Activated T-helper 2 cell treated with anti-CD3 and anti-CD28 coated beads, Interferon-gamma antibody, Interleukin-2, Interleukin-4, amounts not matched to agents 10 μg/mL and 5 μg/mL and 100 μg/mL, durations not matched to agents 14 hours and 24 hours and 36 hours (primary cell): ENCODE measurements at regions of chrX and their contacts with region 1.

Region 1: DNA sequence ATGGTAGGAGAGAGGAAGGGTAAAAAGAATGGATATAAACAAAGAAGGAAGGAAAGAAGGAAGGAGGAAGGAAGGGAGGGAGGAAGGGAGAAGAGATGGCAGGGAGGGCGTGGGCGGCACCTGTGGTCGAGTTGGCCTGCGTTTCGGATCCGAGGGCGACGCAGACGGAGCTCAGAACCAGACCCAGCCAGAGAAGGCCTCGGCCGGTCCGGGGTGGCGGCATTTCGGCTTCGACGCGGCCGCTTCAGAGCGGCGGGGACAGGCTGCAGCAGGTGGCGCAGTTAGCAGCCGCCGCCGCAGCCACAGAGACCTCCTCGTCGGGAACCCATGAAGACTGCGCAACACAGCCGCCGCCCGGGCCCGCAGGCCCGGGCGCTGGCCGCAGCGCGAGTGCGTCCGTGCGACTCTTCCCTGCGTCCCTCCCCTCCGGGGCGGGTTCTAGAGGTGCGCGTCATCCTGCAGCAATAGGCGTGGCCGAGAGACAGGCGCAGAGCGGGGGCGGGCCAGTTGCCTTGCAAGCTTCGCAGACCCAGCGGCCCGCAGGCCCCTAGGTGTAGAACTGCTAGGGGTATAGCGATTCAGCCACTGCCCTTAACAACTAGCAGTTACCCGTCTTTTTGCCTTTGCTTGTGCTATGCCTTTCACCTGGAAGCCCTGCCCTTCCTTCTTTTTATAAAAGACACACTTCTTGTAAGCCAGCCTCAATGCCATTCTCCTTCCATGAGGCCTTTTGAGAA is at the start of gene IDS:
- DNase-seq: peak; percentile 85
- H3K4me3 Mint-ChIP-seq: peak within 1 kb of the TSS; percentile 94
- H3K27ac Mint-ChIP-seq: peak within 1 kb of the TSS; percentile 95
- H3K4me1 Mint-ChIP-seq: peaks cover 31% of the 10 kb centered on the region
- H3K27me3 Mint-ChIP-seq: no peaks in the 10 kb centered on the region
- total RNA-seq, gene IDS: 40.4 and 43.7 TPM in 2 replicates

Region 2: GRCh38 chrX:147911192-147912022 is 1593.7 kb before region 1 on chrX and contains the start of gene FMR1:
- intact Hi-C with region 1: loop called (anchors 10 kb)
- DNase-seq: peak; percentile 92
- H3K4me3 Mint-ChIP-seq: peak within 1 kb of the TSS; percentile 95
- H3K27ac Mint-ChIP-seq: peak within 1 kb of the TSS; percentile 86
- H3K4me1 Mint-ChIP-seq: peaks cover 27% of the 10 kb centered on the region
- H3K27me3 Mint-ChIP-seq: peaks cover 3% of the 10 kb centered on the region
- total RNA-seq, gene FMR1: 34.7 TPM in 2 replicates

Region 3: DNA sequence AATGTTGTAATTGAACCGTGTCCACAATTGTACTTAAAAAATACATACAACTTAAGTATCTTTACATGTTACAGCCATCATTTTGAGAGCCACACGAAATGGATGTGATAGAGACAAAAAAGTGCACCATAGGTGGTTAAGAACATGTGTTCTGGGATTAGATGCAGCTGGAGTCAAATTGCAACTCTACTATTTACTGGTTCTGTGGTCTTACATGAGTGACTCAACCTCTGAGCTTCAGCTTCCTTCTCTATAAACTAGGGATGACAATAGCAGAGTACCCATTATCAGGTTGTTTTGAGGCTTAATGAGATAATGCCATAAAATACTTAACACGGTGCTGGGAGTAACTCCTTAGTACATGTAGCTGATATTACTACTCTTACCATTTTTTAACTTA is 130.3 kb before region 1 on chrX:
- intact Hi-C with region 1: no loop called
- DNase-seq: no peak
- H3K4me3 Mint-ChIP-seq: no peak overlapping the region
- H3K27ac Mint-ChIP-seq: no peak overlapping the region
- H3K4me1 Mint-ChIP-seq: no peaks in the 10 kb centered on the region
- H3K27me3 Mint-ChIP-seq: no peaks in the 10 kb centered on the region

Region 4: DNA sequence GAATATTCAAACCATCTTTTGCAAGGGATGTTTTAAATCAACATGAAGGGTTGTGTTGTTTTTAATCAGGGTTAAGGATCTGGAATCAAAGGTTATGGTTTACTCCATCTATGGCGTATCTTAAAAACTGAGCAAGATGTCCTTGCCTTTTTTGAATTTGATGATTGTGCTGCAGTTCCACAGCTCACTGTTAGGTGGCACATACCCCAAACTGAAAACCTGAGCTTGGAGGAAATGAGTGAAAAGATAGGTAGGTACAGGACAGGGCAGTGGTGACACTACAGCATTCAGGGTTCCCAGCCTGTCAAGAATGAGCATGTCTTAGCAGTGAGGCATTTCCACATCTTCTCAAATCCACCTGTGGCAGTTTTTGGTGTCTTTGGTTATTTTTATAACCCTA is 22.6 kb after region 1 on chrX:
- intact Hi-C with region 1: loop called (anchors 2 kb)
- DNase-seq: peak; percentile 26
- H3K4me3 Mint-ChIP-seq: no peak overlapping the region
- H3K27ac Mint-ChIP-seq: peak overlapping the region; percentile 74
- H3K4me1 Mint-ChIP-seq: peaks cover 17% of the 10 kb centered on the region
- H3K27me3 Mint-ChIP-seq: no peaks in the 10 kb centered on the region

Region 5: DNA sequence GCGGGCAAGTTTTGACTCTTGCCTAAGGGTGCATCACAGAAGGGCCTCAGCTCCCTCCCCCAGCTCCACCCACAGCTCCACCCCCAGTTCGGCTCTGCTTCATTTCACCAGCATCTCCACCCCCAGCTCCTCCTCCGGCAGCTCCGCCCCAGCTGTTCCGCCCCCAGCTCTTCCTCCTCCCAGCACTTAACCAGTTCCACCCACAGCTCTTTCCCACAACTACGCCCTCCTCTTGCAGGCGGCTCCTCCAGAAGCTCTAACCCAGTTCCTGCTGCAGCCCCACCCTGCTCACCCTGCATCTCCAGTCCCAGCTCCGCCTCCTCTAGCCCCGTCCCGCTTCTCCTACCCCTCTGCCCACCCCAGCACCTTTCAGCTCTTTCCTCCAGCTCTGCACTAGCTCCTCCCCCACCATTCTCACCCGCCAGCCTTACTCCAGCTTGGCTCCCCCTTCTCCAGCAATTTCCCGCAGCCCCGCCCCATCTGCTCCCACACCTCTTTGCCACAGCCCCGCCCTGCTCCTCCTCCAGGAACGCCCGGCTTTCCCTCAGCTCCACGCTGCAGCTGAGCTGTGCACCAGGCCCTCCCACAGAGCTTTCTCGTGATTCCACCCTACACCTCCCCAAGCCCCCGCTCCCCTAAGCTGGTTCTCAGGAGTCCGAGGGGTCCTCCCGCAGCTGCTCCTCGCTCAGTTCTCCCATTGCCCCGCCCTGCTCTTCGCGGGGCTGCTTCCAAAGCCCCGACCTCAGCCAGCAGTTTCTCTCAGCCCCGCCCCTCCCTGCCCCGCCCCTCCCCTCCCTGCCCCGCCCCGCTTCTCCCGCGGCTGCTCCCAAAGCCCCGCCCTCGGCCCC is 34.4 kb after region 1 on chrX:
- intact Hi-C with region 1: loop called (anchors 2 kb)
- DNase-seq: peak; percentile 83
- H3K4me3 Mint-ChIP-seq: peak overlapping the region; percentile 81
- H3K27ac Mint-ChIP-seq: peak overlapping the region; percentile 76
- H3K4me1 Mint-ChIP-seq: peaks cover 4% of the 10 kb centered on the region
- H3K27me3 Mint-ChIP-seq: no peaks in the 10 kb centered on the region